Aorta (tissue), 5 donors: ENCODE measurements at regions of chr7 and their contacts with region 1.

Region 1: DNA sequence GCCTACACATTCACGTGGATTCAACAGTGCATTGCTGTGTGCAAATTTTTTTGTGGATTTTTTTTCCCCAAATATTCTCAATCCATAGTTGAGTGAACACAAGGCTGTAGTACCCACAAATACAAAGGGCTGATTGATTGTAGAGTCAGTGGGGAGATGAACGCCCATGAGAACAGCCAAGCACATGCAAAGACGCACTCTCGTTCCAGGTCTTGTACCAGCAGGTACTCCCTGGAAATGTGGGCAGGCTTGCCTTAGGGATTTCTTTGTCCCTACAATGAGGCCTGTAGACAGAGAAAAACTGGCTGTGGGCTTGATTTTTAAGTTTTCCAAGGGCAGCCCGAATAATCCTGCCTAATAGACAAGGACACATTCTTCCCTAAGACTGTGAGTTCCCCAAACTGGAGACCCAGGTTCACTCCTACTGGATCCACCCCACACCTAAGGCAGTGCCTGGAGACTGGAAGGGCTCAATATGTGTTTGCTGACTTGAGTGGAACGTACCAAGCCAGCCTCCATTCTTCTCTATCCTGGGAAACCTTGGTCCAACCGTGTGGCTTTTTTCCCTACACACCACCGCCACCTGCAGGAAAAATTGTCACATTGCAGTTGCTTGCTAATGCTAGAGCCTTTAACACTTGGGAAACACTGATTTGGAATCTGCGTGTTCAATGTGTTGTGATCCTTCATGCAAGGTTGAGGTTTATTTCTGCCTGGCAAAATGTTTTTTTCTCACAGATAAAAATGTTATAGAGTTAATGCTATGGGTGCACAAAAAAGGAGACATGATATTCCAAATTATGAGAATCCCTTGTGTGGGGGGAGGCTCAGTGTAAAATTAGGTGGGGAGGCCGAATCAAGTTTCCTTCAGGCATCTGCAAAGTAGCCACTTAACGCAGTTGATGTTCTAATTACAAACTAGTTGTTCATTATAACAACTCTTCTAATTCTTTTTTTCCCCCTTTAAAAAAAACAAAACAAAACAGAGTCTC is 49.3 kb downstream of the PPP1R17 start:
- DNase-seq: no peak
- ATAC-seq: peak; percentile 71
- H3K4me3 ChIP-seq: no peak overlapping the region
- H3K27ac ChIP-seq: no peak overlapping the region
- H3K4me1 ChIP-seq: no peaks in the 10 kb centered on the region
- H3K27me3 ChIP-seq: no peaks in the 10 kb centered on the region

Region 2: DNA sequence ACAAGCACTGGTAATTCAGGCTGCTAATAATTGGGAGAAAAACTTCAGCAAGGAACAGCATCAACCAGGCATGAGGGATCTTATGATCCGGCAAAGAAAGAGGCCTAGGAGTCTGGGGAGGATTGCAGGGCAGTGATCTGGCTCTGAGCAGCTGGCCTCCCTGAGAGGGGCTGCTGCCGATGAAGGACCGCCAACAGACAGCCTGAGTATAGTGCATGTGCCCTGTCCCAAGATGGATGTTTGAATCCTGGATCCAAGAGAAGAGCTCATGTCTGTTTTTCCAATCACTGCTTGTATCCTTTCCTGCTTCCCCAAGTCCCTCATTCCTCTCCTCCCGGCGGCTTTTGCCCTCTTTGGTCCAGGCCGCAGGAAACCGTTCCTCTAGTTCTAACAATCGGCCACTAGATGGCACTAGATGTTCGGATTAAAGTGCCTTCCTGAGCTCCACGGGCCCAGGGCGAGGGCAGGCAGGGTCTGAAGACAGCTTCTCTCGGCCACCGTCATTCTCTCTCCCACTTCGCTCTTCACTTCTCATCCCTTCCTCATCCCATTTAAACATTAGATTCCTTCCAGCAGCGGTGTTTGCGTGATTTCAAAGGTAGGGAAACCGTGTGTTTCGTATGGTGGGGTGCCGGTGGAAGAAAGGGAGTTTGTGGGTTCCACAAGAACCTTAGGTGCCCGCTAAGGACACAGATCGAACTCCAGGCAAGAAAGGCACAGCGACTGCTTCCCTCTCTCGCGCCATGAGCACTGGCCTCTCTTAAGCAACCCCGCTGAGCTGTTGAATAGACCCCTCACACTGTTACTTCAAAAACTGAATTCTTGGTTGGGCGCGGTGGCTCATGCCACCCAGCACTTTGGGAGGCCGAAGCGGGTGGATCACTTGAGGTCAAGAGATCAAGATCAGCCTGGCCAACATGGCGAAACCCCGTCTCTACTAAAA is 601.8 kb before region 1 on chr7:
- intact Hi-C with region 1: loop called in 1 of 2 experiments (anchors 5 kb)
- DNase-seq: peak; percentile 64 to 85
- ATAC-seq: peak; percentile 85
- H3K4me3 ChIP-seq: no peak overlapping the region
- H3K27ac ChIP-seq: no peak overlapping the region
- H3K4me1 ChIP-seq: no peaks in the 10 kb centered on the region
- H3K27me3 ChIP-seq: no peaks in the 10 kb centered on the region

Region 3: GRCh38 chr7:31443457-31443856 is 292.8 kb before region 1 on chr7:
- intact Hi-C with region 1: loop called (anchors 10 kb)
- DNase-seq: no peak
- ATAC-seq: peak; percentile 70
- H3K4me3 ChIP-seq: no peak overlapping the region
- H3K27ac ChIP-seq: no peak overlapping the region
- H3K4me1 ChIP-seq: no peaks in the 10 kb centered on the region
- H3K27me3 ChIP-seq: no peaks in the 10 kb centered on the region

Region 4: GRCh38 chr7:31648288-31648687 is 88.0 kb before region 1 on chr7:
- intact Hi-C with region 1: loop called in 1 of 2 experiments (anchors 5 kb)
- DNase-seq: no peak
- ATAC-seq: no peak
- H3K4me3 ChIP-seq: no peak overlapping the region
- H3K27ac ChIP-seq: no peak overlapping the region
- H3K4me1 ChIP-seq: no peaks in the 10 kb centered on the region
- H3K27me3 ChIP-seq: peaks cover 0 to 2% of the 10 kb centered on the region in 2 donors